Mammary epithelial cell (primary cell): ENCODE measurements at regions of chr11 and their contacts with region 1.

Region 1: GRCh38 chr11:94973099-94973968 is at the starts of genes CWC15 and KDM4D:
- DNase-seq: peak; percentile 90
- H3K4me3 ChIP-seq: peak within 1 kb of the TSS; percentile 86 to 99 (median 89)
- H3K27ac ChIP-seq: peak within 1 kb of the TSS; percentile 80
- H3K4me1 ChIP-seq: peaks cover 9% of the 10 kb centered on the region
- H3K27me3 ChIP-seq: no peaks in the 10 kb centered on the region
- CTCF ChIP-seq: no peak
- total RNA-seq, gene CWC15: 27.5 to 46.5 TPM
- total RNA-seq, gene KDM4D: 1.0 TPM

Region 2: GRCh38 chr11:94731880-94732601 is 241.3 kb before region 1 on chr11:
- CTCF ChIA-PET with region 1: no interaction called
- dilution Hi-C with region 1: no loop called
- in situ Hi-C with region 1: no loop called
- intact Hi-C with region 1: loop called (anchors 10 kb)
- DNase-seq: peak; percentile 89
- H3K4me3 ChIP-seq: no peak overlapping the region
- H3K27ac ChIP-seq: peak overlapping the region; percentile 90
- H3K4me1 ChIP-seq: peaks cover 89% of the 10 kb centered on the region
- H3K27me3 ChIP-seq: no peaks in the 10 kb centered on the region
- CTCF ChIP-seq: no peak

Region 3: DNA sequence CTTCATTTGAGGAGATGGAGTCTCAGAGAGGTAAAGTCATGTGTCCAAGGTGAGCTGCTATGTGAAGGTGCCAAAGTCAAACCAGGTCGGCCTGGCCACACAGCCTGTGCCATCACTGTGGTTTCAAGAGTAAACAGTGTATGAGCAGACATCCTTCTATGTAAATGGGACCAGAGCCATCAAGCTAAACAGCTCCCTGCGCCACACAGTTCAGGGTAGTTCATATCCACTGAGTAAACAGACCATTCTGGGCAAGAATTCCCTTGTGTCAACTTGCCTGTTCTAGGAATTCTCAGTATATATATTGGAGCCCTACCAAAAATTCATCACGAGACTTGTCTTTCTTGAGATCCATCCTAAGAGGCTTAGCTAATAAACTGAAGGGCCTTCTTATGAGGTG is 127.7 kb before region 1 on chr11:
- CTCF ChIA-PET with region 1: no interaction called
- dilution Hi-C with region 1: no loop called
- in situ Hi-C with region 1: no loop called
- intact Hi-C with region 1: no loop called
- DNase-seq: peak; percentile 78
- H3K4me3 ChIP-seq: no peak overlapping the region
- H3K27ac ChIP-seq: no peak overlapping the region
- H3K4me1 ChIP-seq: peaks cover 25% of the 10 kb centered on the region
- H3K27me3 ChIP-seq: no peaks in the 10 kb centered on the region
- CTCF ChIP-seq: no peak

Region 4: DNA sequence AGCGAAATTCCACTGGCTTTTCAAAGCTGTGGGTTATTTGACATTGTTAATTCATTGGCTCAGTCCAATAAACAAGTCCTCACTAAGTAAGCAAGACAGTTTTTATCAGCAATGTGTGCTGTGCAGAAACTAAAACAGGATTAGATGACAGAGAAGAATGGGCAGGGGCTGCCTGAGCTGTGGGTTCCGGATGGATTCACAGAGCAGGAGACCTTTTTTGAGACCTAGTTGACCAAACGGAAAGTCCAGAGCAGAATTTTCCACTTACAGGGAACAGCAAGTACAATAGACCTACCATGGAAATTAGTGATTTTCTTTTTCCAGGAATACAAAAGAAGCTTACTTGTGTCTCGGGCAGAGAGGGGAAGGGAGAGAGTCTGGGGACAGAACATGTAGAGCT is 70.7 kb after region 1 on chr11:
- CTCF ChIA-PET with region 1: no interaction called
- dilution Hi-C with region 1: no loop called
- in situ Hi-C with region 1: no loop called
- intact Hi-C with region 1: no loop called
- DNase-seq: no peak
- H3K4me3 ChIP-seq: no peak overlapping the region
- H3K27ac ChIP-seq: no peak overlapping the region
- H3K4me1 ChIP-seq: no peaks in the 10 kb centered on the region
- H3K27me3 ChIP-seq: no peaks in the 10 kb centered on the region
- CTCF ChIP-seq: no peak

Region 5: DNA sequence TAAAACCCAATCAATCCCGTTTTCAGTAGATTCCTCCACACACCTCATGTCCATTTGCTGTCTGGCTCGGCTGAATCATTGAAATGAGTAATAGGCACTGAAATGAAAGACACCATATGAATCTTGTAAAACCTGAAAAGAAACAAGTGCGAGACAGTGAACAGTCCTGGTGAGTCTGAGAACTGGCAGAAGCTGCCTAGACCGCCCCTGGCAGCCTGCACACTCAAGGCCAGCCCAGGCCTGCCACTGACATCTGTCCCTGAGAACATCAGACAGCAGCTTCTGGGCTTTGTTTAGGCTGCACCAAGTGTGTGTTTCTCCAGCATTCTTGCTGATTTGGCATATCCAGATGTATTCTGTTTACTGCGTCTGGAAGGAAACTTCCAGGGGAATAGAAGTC is 161.2 kb after region 1 on chr11:
- CTCF ChIA-PET with region 1: no interaction called
- dilution Hi-C with region 1: no loop called
- in situ Hi-C with region 1: no loop called
- intact Hi-C with region 1: loop called (anchors 5 kb)
- DNase-seq: peak; percentile 99
- H3K4me3 ChIP-seq: no peak overlapping the region
- H3K27ac ChIP-seq: peak overlapping the region; percentile 82
- H3K4me1 ChIP-seq: peaks cover 31% of the 10 kb centered on the region
- H3K27me3 ChIP-seq: no peaks in the 10 kb centered on the region
- CTCF ChIP-seq: no peak

Region 6: DNA sequence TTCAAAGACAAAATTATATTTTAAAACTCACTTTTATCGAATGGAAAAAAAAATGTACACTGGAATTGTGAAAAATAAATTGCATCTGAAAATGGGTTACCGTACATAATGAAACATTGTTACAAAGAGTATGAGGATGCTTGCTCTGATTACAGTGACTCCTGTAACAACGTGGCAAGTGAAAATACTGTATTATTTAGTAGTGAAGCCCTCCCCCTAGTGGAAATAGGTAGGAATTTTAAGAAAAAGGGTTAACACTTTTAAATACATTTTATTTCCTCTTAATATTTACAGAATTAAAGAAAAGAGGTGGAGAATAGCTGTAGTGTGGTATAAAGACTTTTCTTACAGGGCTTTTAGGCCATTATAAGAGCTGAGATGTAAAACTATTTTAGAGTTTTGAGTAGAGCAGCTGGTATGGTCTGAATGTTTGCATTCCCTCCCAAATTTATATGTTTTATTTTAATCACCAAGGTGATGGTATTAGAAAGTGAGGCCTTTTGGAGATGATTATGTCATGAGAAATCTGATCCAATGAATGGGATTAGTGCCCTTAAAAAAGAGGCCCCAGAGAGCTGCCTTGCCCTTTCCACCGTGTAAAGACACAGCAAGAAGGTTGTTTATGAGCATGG is 791.0 kb after region 1 on chr11:
- CTCF ChIA-PET with region 1: no interaction called
- dilution Hi-C with region 1: no loop called
- in situ Hi-C with region 1: no loop called
- intact Hi-C with region 1: loop called (anchors 10 kb)
- DNase-seq: peak; percentile 37
- H3K4me3 ChIP-seq: no peak overlapping the region
- H3K27ac ChIP-seq: no peak overlapping the region
- H3K4me1 ChIP-seq: peaks cover 8% of the 10 kb centered on the region
- H3K27me3 ChIP-seq: no peaks in the 10 kb centered on the region
- CTCF ChIP-seq: peak; percentile 45 to 61